H1 (cell line): ENCODE measurements at regions of chrX and their contacts with region 1.

Region 1: GRCh38 chrX:23782863-23783568 is at the start of gene SAT1:
- DNase-seq: peak; percentile 69 to 92
- H3K4me3 ChIP-seq: peak within 1 kb of the TSS; percentile 65 to 88 (median 72)
- H3K27ac ChIP-seq: no peak within 1 kb of the TSS
- H3K4me1 ChIP-seq: no peaks in the 10 kb centered on the region
- H3K27me3 ChIP-seq: no peaks in the 10 kb centered on the region
- CTCF ChIP-seq: peak; percentile 55 to 69 (median 55)
- EP300 ChIP-seq: 0 out of 3 replicates have a peak, but pooled peaks of 1 of the 2 experiments have one; percentile 32
- POLR2A ChIP-seq: peak; percentile 95 to 96
- RAD21 ChIP-seq: peak; percentile 52 to 68
- total RNA-seq, gene SAT1: 26.3 and 29.2 TPM in 2 replicates

Region 2: GRCh38 chrX:23803931-23804381 is 20.9 kb after region 1 on chrX:
- CTCF ChIA-PET with region 1: no interaction called
- POLR2A ChIA-PET with region 1: interaction called, 12 read pairs
- DNase-seq: no peak
- H3K4me3 ChIP-seq: no peak overlapping the region
- H3K27ac ChIP-seq: no peak overlapping the region
- H3K4me1 ChIP-seq: no peaks in the 10 kb centered on the region
- H3K27me3 ChIP-seq: no peaks in the 10 kb centered on the region
- CTCF ChIP-seq: no peak
- EP300 ChIP-seq: no peak
- POLR2A ChIP-seq: no peak
- RAD21 ChIP-seq: no peak

Region 3: DNA sequence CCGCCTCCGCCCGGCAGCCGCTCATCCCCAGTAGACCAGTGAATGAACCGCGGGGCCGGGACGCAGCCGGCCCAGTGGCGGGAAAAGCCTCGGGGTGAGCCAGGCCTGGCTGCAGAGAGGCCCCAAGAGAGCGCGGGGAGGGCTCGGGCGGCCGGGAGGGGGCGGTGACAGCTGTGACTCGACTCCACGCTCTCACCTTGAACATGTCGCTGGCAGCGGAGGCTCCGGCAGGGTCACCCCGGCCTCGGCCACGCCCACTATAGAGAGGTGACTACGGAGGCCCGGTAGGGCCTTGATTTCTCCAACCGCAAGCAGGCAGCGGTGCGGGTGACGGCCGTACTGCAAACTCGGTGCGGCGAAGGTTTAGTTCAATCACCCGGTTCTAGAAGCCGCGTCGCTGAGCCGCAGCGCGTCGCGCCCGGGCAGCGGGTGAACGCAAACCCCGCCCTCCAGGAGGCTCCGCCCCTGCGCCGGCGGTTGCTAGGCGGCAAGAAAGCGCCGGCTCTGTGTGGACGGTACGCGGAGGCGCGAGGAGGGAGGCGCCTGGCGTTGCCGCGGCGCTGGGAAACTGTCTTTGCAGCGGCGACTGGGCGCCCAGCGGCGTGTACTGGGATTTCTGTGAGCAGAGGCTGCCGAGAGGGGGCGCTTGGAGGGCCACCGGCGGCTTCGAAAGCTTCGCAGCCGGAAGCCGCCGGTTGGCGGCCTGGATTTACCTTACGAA is 124.6 kb after region 1 on chrX and contains the starts of genes APOO and CXorf58:
- CTCF ChIA-PET with region 1: interaction called, 20 read pairs
- POLR2A ChIA-PET with region 1: interaction called, 11 read pairs
- DNase-seq: peak; percentile 84 to 87
- H3K4me3 ChIP-seq: peak within 1 kb of the TSS; percentile 58 to 90 (median 64)
- H3K27ac ChIP-seq: peak within 1 kb of the TSS; percentile 45; the same call in 1 of the 2 replicates
- H3K4me1 ChIP-seq: peaks cover 0 to 4% (median 0%) of the 10 kb centered on the region in 4 experiments; a peak in 1 of 7 replicates
- H3K27me3 ChIP-seq: no peaks in the 10 kb centered on the region
- CTCF ChIP-seq: peak; percentile 62 to 99 (median 64)
- EP300 ChIP-seq: peak in 1 of 2 experiments; percentile 33; a peak in 1 of 3 replicates
- POLR2A ChIP-seq: no peak
- RAD21 ChIP-seq: peak; percentile 35 to 57; a peak in 3 of 4 replicates
- total RNA-seq, gene APOO: 45.0 and 48.9 TPM in 2 replicates
- total RNA-seq, gene CXorf58: not detected in 2 replicates